ENCODE measurements at regions of chrX and their contacts with region 1.

Region 1: DNA sequence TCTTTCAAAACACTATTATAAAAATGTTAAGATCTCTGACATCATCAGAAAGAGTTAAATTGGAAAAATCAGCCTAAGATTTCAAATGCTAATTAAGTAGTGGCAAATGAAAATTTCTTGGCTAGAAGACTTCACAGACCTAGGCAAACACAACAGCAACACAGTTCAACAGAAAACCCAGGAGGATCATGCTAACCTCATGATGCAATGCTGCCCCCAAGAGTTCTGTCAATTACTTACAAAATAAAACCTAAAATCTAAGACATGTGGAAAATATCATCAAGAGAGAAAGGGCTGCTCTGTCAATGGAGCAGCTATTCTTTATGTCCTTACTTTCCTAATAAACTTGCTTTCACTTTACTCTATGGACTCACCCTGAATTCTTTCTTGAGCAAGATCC is 21.0 kb downstream of the S100G start:
- DNase-seq: peak in 4 of 5 donors; percentile 34 to 43 (median 38)
- H3K4me3 ChIP-seq: no peak overlapping the region
- H3K4me3 Mint-ChIP-seq: no peak overlapping the region
- H3K27ac ChIP-seq: no peak overlapping the region
- H3K27ac Mint-ChIP-seq: peak overlapping the region in 2 of 7 donors; percentile 7 to 43
- H3K4me1 ChIP-seq: no peaks in the 10 kb centered on the region
- H3K4me1 Mint-ChIP-seq: peaks cover 0 to 5% (median 3%) of the 10 kb centered on the region in 4 donors
- H3K27me3 ChIP-seq: no peaks in the 10 kb centered on the region
- H3K27me3 Mint-ChIP-seq: no peaks in the 10 kb centered on the region

Region 2: DNA sequence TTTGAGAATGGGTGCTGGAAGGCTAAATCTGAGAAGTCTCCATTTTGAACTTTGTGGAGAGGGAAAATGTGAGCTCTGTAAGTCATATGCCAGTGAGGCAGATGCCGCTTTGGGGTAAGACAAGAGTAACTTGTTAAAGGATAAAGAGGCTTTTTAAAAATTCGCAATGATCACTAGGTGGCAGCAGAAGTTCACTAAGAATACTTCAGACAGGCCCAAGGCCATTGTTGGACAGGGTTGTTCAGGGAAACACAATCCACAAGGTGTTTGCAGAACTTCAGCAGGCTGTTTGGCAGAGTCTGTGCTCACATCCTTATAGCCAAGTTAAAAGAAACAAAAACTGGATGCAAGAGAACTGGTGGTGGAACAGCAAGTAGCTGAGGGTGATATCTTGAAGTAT is 1322.0 kb before region 1 on chrX:
- CTCF ChIA-PET with region 1: no interaction called
- POLR2A ChIA-PET with region 1: no interaction called
- intact Hi-C with region 1: loop called (anchors 5 kb)
- DNase-seq: peak in 4 of 5 donors; percentile 11 to 24 (median 16)
- H3K4me3 ChIP-seq: no peak overlapping the region
- H3K4me3 Mint-ChIP-seq: no peak overlapping the region
- H3K27ac ChIP-seq: no peak overlapping the region
- H3K27ac Mint-ChIP-seq: no peak overlapping the region
- H3K4me1 ChIP-seq: no peaks in the 10 kb centered on the region
- H3K4me1 Mint-ChIP-seq: no peaks in the 10 kb centered on the region
- H3K27me3 ChIP-seq: no peaks in the 10 kb centered on the region
- H3K27me3 Mint-ChIP-seq: peaks cover 3% of the 10 kb centered on the region in 2 donors

Region 3: DNA sequence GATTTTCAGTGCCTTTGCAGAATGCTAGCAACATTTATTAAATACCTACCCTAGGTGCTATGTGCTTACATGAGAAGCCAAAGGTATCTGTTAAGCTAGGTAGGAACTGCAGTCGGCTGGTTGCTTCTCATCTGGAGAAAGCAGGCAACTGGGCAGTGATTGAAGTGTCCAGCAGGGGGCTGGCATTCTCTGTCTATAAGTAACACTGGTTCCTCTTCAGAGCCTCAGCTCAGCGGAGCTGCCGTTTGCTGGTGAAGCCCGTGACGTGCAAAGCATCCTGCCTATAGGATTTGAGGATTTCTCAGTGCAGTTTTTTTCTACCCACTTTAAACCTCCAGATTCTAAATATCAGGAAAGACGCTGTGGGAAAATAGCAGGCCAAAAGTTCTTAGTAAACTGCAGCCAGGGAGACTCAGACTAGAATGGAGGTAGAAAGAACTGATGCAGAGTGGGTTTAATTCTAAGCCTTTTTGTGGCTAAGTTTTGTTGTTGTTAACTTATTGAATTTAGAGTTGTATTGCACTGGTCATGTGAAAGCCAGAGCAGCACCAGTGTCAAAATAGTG is 547.7 kb before region 1 on chrX and contains the start of gene GRPR:
- CTCF ChIA-PET with region 1: interaction called, 5 read pairs
- POLR2A ChIA-PET with region 1: no interaction called
- intact Hi-C with region 1: loop called (anchors 2 kb)
- DNase-seq: peak; percentile 43 to 57 (median 43)
- H3K4me3 ChIP-seq: no peak within 1 kb of the TSS
- H3K4me3 Mint-ChIP-seq: peak within 1 kb of the TSS in 3 of 8 donors; percentile 49 to 63 (median 51)
- H3K27ac ChIP-seq: no peak within 1 kb of the TSS
- H3K27ac Mint-ChIP-seq: no peak within 1 kb of the TSS
- H3K4me1 ChIP-seq: no peaks in the 10 kb centered on the region
- H3K4me1 Mint-ChIP-seq: peaks cover 4 to 11% (median 7%) of the 10 kb centered on the region in 4 donors
- H3K27me3 ChIP-seq: no peaks in the 10 kb centered on the region
- H3K27me3 Mint-ChIP-seq: peaks cover 3 to 7% of the 10 kb centered on the region in 2 donors
- total RNA-seq, gene GRPR: 0.23 to 0.33 TPM

Region 4: GRCh38 chrX:16278927-16279326 is 392.1 kb before region 1 on chrX:
- CTCF ChIA-PET with region 1: no interaction called
- POLR2A ChIA-PET with region 1: no interaction called
- intact Hi-C with region 1: loop called (anchors 1 kb)
- DNase-seq: no peak
- H3K4me3 ChIP-seq: no peak overlapping the region
- H3K4me3 Mint-ChIP-seq: no peak overlapping the region
- H3K27ac ChIP-seq: no peak overlapping the region
- H3K27ac Mint-ChIP-seq: no peak overlapping the region
- H3K4me1 ChIP-seq: no peaks in the 10 kb centered on the region
- H3K4me1 Mint-ChIP-seq: no peaks in the 10 kb centered on the region
- H3K27me3 ChIP-seq: no peaks in the 10 kb centered on the region
- H3K27me3 Mint-ChIP-seq: peaks cover 2 to 6% of the 10 kb centered on the region in 2 donors

Region 5: GRCh38 chrX:16436348-16437188 is 234.4 kb before region 1 on chrX:
- CTCF ChIA-PET with region 1: interaction called, 8 read pairs
- POLR2A ChIA-PET with region 1: no interaction called
- intact Hi-C with region 1: loop called (anchors 1 kb)
- DNase-seq: peak in 4 of 5 donors; percentile 43 to 52 (median 48)
- H3K4me3 ChIP-seq: no peak overlapping the region
- H3K4me3 Mint-ChIP-seq: no peak overlapping the region
- H3K27ac ChIP-seq: no peak overlapping the region
- H3K27ac Mint-ChIP-seq: no peak overlapping the region
- H3K4me1 ChIP-seq: peaks cover 13% of the 10 kb centered on the region
- H3K4me1 Mint-ChIP-seq: peaks cover 5 to 15% (median 11%) of the 10 kb centered on the region in 4 donors
- H3K27me3 ChIP-seq: no peaks in the 10 kb centered on the region
- H3K27me3 Mint-ChIP-seq: no peaks in the 10 kb centered on the region

Region 6: GRCh38 chrX:16445166-16445752 is 225.7 kb before region 1 on chrX:
- CTCF ChIA-PET with region 1: interaction called, 5 read pairs
- POLR2A ChIA-PET with region 1: no interaction called
- intact Hi-C with region 1: loop called (anchors 1 kb)
- DNase-seq: peak; percentile 42 to 49 (median 46)
- H3K4me3 ChIP-seq: no peak overlapping the region
- H3K4me3 Mint-ChIP-seq: no peak overlapping the region
- H3K27ac ChIP-seq: no peak overlapping the region
- H3K27ac Mint-ChIP-seq: peak overlapping the region in 1 of 7 donors; percentile 41
- H3K4me1 ChIP-seq: no peaks in the 10 kb centered on the region
- H3K4me1 Mint-ChIP-seq: peaks cover 0 to 12% (median 2%) of the 10 kb centered on the region in 4 donors
- H3K27me3 ChIP-seq: no peaks in the 10 kb centered on the region
- H3K27me3 Mint-ChIP-seq: no peaks in the 10 kb centered on the region